ENCODE measurements at regions of chr15 and their contacts with region 1.

Region 1: DNA sequence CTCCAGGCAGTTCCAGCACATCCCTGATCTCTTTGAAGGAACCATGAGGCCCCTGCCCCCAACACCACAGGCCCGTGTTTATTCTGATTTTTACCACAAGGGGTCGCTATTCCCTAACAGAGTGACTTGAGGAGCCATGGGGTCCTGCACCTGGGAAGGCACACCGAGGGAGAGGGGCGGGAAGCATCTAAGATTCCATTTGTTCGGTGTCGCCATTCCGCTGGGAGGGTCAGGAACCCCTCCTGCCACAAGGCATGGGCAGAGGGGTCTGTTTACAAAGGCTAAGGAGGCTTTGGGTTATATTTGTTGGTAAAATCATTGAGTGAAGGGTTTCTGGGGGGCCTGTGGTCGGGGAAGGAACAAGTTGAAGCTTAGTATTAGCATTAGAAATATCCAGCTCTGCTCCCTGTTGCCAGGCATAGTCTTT is 77.1 kb downstream of the WDR76 start:
- DNase-seq: peak in 1 of 2 donors; percentile 50
- ATAC-seq: peak; percentile 65 to 85 (median 80)
- H3K4me3 ChIP-seq: no peak overlapping the region
- H3K27ac ChIP-seq: no peak overlapping the region
- H3K4me1 ChIP-seq: peaks cover 0 to 20% (median 4%) of the 10 kb centered on the region in 9 donors
- H3K27me3 ChIP-seq: peaks cover 0 to 4% (median 0%) of the 10 kb centered on the region in 7 donors
- CTCF ChIP-seq: peak; percentile 64 to 88 (median 84)

Region 2: DNA sequence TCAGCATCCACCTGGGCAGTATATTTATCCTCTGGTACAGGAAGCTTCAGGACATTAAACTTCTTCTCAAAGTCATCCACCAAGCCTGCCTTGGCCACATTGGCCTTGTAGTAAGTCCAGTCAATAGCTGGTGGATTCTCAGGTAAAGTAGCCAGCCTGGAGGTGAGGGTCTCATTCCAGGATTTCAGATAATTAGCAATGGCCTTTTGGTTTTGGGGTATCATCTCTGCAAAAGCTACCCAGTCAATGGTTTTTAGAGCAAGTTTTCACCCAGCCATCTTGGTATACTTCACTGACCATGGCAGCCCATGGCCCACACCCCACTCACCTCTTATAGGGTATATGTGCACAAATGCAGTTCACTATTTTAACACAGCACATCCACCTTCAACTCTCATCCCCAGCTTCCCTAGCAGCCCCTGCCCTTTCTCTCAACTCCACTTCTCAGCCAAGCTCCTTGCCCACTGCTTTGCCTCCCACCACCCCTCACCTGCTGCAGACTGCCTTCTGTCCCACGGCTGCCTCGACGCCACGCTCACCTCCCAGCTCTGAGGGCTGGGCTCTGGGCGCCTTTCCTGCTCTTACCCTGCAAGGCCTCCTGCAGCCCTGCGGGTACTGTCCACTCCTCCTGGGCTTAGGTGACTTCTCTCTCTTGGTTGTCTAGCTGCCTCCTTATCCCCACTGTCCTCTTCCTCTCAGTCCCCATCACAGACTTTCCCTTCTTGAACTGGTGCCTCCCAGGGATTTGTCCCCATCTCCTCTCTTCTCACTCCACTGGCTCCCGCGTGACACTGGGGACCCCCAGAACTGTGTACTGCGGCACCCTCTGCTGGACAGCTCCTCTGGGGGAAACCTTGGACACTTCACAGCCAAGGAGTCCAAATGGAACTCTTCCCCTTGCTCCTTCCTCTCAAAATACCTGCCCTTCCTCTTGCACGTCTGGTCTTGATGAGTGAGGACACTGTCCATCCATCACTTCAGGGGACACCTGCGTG is 635.5 kb before region 1 on chr15:
- intact Hi-C with region 1: no loop called
- DNase-seq: no peak
- ATAC-seq: peak in 2 of 8 donors; percentile 42 to 63
- H3K4me3 ChIP-seq: no peak overlapping the region
- H3K27ac ChIP-seq: no peak overlapping the region
- H3K4me1 ChIP-seq: peaks cover 0 to 3% (median 0%) of the 10 kb centered on the region in 9 donors
- H3K27me3 ChIP-seq: peaks cover 0 to 17% (median 4%) of the 10 kb centered on the region in 7 donors
- CTCF ChIP-seq: peak in 5 of 9 donors; percentile 14 to 32 (median 22)

Region 3: DNA sequence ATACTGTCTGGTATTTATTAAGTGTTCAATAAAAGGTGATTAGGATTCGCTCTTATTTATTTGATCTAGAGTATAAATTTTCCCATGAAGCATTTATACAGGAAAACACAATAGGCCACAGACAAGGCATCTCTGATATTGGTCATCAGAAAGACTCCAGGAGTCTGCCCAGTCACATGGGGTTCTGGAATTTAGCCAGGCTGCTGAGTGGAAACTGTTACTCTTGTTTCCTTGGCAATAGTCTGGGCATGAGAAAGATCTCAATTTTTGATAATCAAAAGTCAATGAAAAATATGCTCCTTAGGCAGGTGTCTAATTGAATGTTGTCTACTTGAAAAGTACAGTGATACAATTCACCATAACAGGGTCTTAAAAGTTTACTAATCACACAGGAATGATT is 130.0 kb after region 1 on chr15:
- intact Hi-C with region 1: loop called in 1 of 10 experiments (anchors 10 kb)
- DNase-seq: no peak
- ATAC-seq: no peak
- H3K4me3 ChIP-seq: no peak overlapping the region
- H3K27ac ChIP-seq: no peak overlapping the region
- H3K4me1 ChIP-seq: peaks cover 0 to 32% (median 15%) of the 10 kb centered on the region in 9 donors
- H3K27me3 ChIP-seq: peaks cover 0 to 3% (median 0%) of the 10 kb centered on the region in 7 donors
- CTCF ChIP-seq: no peak

Region 4: DNA sequence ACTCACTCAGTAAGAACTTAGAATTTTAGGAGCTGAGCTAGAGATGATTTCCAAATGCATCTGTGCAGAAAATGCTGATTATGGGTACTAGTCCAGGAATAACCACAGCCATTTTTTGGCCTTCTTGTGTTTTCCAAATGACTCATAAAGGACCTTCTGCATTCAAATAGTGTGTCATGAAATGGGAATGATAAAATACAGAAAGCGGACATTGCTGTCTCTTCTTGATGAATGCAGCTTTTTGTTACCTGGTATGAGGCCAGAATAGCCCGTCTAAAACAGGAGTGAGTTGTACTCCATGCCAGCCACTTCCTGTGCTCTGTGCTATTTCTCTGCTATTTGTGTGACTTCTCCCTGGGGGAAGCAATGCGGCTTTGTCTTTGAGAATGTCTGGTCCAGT is 311.7 kb after region 1 on chr15:
- intact Hi-C with region 1: loop called in 9 of 10 experiments (anchors 2 to 10 kb)
- DNase-seq: no peak
- ATAC-seq: no peak
- H3K4me3 ChIP-seq: no peak overlapping the region
- H3K27ac ChIP-seq: no peak overlapping the region
- H3K4me1 ChIP-seq: no peaks in the 10 kb centered on the region
- H3K27me3 ChIP-seq: peaks cover 0 to 14% (median 3%) of the 10 kb centered on the region in 7 donors
- CTCF ChIP-seq: no peak

Region 5: DNA sequence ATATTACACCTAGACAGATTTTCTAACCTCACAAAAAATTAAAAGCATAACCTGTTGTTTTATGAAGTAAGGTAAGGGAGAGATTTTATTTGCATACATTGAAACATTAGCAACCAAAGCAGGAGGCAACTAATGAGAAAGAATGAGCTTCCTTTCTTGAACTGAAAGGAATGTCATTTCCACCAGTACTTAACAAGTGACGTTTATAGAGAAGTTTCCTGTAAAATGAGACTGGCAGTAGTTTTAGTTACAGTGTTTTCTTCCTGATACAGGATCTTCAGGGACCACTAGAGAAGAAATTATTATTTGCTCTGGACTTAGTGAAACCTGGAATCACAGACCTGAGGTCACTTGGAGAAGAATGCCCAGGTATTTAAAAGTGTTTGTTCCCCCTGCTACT is 318.6 kb after region 1 on chr15:
- intact Hi-C with region 1: loop called in 9 of 10 experiments (anchors 2 to 10 kb)
- DNase-seq: no peak
- ATAC-seq: no peak
- H3K4me3 ChIP-seq: no peak overlapping the region
- H3K27ac ChIP-seq: no peak overlapping the region
- H3K4me1 ChIP-seq: no peaks in the 10 kb centered on the region
- H3K27me3 ChIP-seq: peaks cover 0 to 6% (median 0%) of the 10 kb centered on the region in 7 donors
- CTCF ChIP-seq: no peak

Measured in heart right ventricle (tissue), 16 donors.